Body of pancreas (tissue), 4 donors: ENCODE measurements at regions of chr4 and their contacts with region 1.

Region 1: GRCh38 chr4:67874986-67875385 is 8.8 kb downstream of the TMPRSS11D start:
- DNase-seq: no peak
- ATAC-seq: no peak
- H3K4me3 ChIP-seq: no peak overlapping the region
- H3K27ac ChIP-seq: no peak overlapping the region
- H3K4me1 ChIP-seq: no peaks in the 10 kb centered on the region
- H3K27me3 ChIP-seq: no peaks in the 10 kb centered on the region
- CTCF ChIP-seq: no peak
- POLR2A ChIP-seq: no peak

Region 2: DNA sequence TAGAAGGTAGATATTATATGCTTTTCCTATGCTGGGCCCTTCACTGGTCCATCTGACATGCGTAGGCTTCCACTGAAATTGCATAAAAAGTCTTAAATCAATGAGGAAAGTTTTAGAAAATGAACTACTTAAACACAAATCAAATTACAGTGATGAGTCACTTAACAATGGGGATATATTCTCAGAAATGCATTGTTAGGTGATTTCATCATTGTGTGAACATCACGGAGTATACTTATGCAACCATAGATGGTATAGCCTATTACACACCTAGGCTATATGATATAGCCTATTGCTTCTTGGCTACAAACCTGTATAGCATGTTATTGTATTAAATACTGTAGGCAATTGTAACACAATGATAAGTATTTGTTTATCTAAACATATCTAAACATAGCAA is 306.2 kb before region 1 on chr4:
- intact Hi-C with region 1: no loop called
- DNase-seq: no peak
- ATAC-seq: no peak
- H3K4me3 ChIP-seq: no peak overlapping the region
- H3K27ac ChIP-seq: no peak overlapping the region
- H3K4me1 ChIP-seq: no peaks in the 10 kb centered on the region
- H3K27me3 ChIP-seq: no peaks in the 10 kb centered on the region
- CTCF ChIP-seq: no peak
- POLR2A ChIP-seq: no peak

Region 3: DNA sequence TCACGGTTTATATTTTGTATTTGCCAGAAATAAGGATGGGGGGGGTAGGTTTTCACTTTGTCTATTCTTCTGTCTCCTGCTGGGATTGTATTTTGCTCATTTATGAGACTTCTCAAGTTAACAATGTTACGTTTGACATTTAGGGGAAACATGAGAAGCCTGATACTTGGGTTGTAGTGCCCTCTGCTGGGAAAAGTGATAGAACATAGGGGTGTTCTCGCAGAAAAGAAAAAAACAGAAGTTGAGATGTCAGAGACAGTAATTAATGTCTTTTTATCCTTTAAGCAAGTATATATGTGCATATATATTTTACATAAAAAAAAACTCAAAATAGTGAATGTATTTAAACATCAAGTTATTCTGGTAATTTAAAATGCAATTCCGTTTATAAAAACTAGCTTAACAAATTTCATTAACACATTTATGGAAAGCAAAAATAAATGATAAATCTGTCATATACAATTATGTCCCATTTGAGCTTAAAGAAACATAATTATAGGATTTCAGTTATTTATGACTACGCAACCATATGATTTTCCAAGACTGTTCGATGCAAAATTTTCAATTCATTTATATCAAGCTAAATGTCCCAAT is 300.7 kb after region 1 on chr4:
- intact Hi-C with region 1: loop called (anchors 5 kb)
- DNase-seq: peak; percentile 19 to 49 (median 35)
- ATAC-seq: peak; percentile 59
- H3K4me3 ChIP-seq: no peak overlapping the region
- H3K27ac ChIP-seq: no peak overlapping the region
- H3K4me1 ChIP-seq: no peaks in the 10 kb centered on the region
- H3K27me3 ChIP-seq: no peaks in the 10 kb centered on the region
- CTCF ChIP-seq: peak; percentile 40 to 65 (median 59)
- POLR2A ChIP-seq: no peak

Region 4: DNA sequence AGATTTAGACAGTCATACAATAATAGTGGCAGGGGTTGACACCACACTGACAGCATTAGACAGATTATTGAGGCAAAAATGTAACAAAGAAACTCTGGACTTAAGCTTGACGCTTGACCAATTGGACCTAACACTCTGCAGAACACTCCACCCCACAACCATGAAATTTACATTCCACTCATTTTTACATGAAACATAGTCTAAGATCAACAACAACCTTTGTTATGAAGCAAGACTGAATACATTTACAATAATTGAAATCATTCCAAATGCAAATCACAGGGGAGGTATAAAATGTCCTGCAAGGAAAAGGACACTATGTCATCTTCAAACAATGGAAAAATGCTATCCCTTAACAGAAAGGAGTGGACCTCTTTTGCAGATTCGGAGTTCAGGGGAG is 935.9 kb after region 1 on chr4:
- intact Hi-C with region 1: no loop called
- DNase-seq: no peak
- ATAC-seq: no peak
- H3K4me3 ChIP-seq: no peak overlapping the region
- H3K27ac ChIP-seq: no peak overlapping the region
- H3K4me1 ChIP-seq: no peaks in the 10 kb centered on the region
- H3K27me3 ChIP-seq: no peaks in the 10 kb centered on the region
- CTCF ChIP-seq: no peak
- POLR2A ChIP-seq: no peak